ENCODE measurements at regions of chr1 and their contacts with region 1.

Region 1: DNA sequence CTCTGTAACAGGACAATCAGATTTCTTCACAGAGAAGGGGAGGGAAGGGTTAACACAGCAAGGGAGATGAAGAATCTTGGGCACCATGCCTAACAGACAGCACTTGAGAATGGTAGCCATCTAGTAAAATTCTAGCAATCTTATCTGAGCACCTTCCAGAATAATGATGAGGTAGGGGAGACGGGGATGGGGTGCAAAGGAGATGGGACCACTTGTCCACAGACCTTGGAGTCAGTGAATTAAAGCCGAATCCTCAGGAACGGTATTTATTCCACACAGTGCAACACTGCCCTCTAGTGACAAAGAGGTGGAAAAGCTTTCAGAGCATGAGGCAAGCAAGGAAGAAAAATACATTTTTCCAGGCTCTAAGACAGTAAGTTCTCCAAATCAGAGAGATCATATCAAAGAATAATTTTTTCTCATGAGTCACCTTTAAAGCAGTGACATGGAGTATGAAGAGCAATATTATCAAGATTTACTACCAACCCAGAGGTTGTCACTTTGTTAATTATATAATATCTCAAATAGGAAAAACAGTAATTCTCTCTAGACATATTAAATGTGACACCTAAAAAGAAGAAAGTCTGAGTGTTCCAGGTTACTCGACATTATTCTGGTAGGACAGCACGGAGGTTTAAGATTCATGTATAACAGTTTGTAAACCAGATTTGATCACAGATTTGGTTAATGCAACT is 43.3 kb upstream of the LPAR3 start:
- DNase-seq: peak in 13 of 35 experiments; percentile 9 to 82 (median 20)
- ATAC-seq: peak; percentile 54 to 72 (median 68)
- H3K4me3 ChIP-seq: no peak overlapping the region
- H3K4me3 Mint-ChIP-seq: no peak overlapping the region
- H3K27ac ChIP-seq: no peak overlapping the region
- H3K27ac Mint-ChIP-seq: no peak overlapping the region
- H3K4me1 ChIP-seq: peaks cover 0 to 4% of the 10 kb centered on the region in 2 experiments
- H3K4me1 Mint-ChIP-seq: peaks cover 4 to 6% (median 4%) of the 10 kb centered on the region in 3 donors
- H3K27me3 ChIP-seq: no peaks in the 10 kb centered on the region
- H3K27me3 Mint-ChIP-seq: no peaks in the 10 kb centered on the region

Region 2: GRCh38 chr1:84781946-84782771 is 154.1 kb before region 1 on chr1:
- CTCF ChIA-PET with region 1: interaction called, 10 to 21 read pairs
- POLR2A ChIA-PET with region 1: no interaction called
- DNase-seq: peak; percentile 42 to 85 (median 70)
- ATAC-seq: peak; percentile 86 to 94 (median 88)
- H3K4me3 ChIP-seq: peak overlapping the region; percentile 20 to 32
- H3K4me3 Mint-ChIP-seq: peak overlapping the region; percentile 75 to 78 (median 77)
- H3K27ac ChIP-seq: no peak overlapping the region
- H3K27ac Mint-ChIP-seq: peak overlapping the region; percentile 47 to 88
- H3K4me1 ChIP-seq: peaks cover 11 to 24% of the 10 kb centered on the region in 2 experiments
- H3K4me1 Mint-ChIP-seq: peaks cover 30 to 34% (median 30%) of the 10 kb centered on the region in 3 donors
- H3K27me3 ChIP-seq: no peaks in the 10 kb centered on the region
- H3K27me3 Mint-ChIP-seq: no peaks in the 10 kb centered on the region

Region 3: GRCh38 chr1:84896279-84896678 is 40.0 kb before region 1 on chr1:
- CTCF ChIA-PET with region 1: no interaction called
- POLR2A ChIA-PET with region 1: no interaction called
- DNase-seq: no peak
- ATAC-seq: no peak
- H3K4me3 ChIP-seq: no peak overlapping the region
- H3K4me3 Mint-ChIP-seq: no peak overlapping the region
- H3K27ac ChIP-seq: no peak overlapping the region
- H3K27ac Mint-ChIP-seq: no peak overlapping the region
- H3K4me1 ChIP-seq: peaks cover 4 to 12% of the 10 kb centered on the region in 2 experiments
- H3K4me1 Mint-ChIP-seq: peaks cover 13 to 16% (median 14%) of the 10 kb centered on the region in 3 donors
- H3K27me3 ChIP-seq: peaks cover 1 to 23% of the 10 kb centered on the region in 2 experiments
- H3K27me3 Mint-ChIP-seq: peaks cover 26 to 31% of the 10 kb centered on the region in 2 donors

Region 4: DNA sequence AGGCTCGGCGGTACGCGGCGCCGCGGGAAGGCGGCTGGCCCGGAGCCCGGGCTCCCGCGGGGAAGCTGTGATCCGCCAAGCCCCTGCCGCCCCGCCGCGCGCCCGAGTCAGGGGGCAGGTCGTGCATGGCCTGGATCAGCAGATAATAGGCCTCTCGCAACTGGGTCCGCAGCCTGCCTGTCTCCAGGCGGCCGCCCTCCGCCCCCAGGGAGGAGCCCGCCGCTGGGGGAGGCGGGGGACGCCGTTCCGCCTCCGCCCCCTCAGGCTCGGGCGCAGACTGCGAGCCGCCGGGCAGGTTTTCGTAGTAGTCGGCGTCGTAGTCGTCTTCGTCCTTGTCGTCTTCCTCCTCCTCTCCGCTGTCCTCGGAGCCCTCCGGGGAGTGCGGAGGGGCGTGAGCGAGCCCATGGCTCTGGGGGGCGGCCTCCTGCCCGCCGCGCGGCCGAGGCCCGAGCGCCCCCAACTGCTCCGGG is 264.6 kb after region 1 on chr1 and contains the start of gene SYDE2:
- CTCF ChIA-PET with region 1: no interaction called
- POLR2A ChIA-PET with region 1: no interaction called
- DNase-seq: peak; percentile 64 to 88 (median 77)
- ATAC-seq: peak; percentile 82 to 88 (median 84)
- H3K4me3 ChIP-seq: peak within 1 kb of the TSS; percentile 63 to 68
- H3K4me3 Mint-ChIP-seq: peak within 1 kb of the TSS; percentile 96 to 98 (median 98)
- H3K27ac ChIP-seq: peak within 1 kb of the TSS; percentile 49
- H3K27ac Mint-ChIP-seq: peak within 1 kb of the TSS; percentile 98 to 99
- H3K4me1 ChIP-seq: peaks cover 3 to 10% of the 10 kb centered on the region in 2 experiments
- H3K4me1 Mint-ChIP-seq: peaks cover 41 to 46% (median 42%) of the 10 kb centered on the region in 3 donors
- H3K27me3 ChIP-seq: peaks cover 5 to 17% of the 10 kb centered on the region in 2 experiments
- H3K27me3 Mint-ChIP-seq: peaks cover 0 to 8% of the 10 kb centered on the region in 2 donors
- total RNA-seq, gene SYDE2: 4.5 to 9.2 (median 5.8) TPM